PC-9 (cell line): ENCODE measurements at regions of chr9 and their contacts with region 1.

Region 1: DNA sequence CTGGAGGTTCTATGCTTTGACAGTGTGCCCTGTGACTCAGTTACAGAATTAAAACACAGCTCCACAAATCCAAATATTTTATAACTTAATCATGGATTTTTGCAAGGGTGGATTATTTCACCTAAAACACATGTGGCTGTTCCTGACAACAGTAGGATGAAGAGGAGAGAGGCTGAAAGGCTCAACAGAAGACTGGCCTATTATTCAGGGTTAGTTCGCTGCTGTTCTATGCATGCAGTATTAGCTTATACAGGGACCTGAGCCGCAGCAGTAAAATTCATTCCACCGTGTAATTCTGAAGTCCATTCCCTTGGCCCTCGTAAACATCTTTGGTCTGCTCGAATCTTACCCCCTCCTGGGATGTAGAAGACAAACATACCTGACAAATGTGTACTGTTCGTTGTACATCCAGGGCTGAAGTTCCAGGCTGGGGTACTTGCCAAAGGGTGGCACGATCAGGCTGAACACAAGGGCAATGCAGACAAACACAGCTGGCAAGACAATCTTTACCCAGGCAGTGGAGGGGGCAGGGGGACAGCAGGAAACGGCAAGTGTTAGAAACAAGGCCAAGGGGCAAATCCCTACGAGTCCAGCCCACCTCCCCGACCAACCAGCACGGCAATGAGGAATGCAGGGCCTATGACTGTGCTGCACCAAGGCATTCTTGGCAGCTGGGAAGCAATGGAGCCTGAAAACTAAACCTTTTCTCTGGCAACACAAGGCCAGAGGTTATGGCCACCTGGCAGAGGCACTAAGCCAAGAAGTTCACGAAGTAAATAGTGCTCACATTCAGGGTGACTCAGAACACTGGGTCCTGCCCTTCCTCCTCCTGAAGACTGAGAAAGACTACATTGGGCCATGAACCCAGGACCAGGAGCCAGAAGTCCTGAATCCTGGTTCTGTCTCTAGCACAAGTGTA is 46.8 kb downstream of the NIPSNAP3B start:
- DNase-seq: peak; percentile 89 to 96
- H3K4me3 ChIP-seq: no peak overlapping the region
- H3K27ac ChIP-seq: peak overlapping the region; percentile 72
- H3K4me1 ChIP-seq: peaks cover 24% of the 10 kb centered on the region
- H3K27me3 ChIP-seq: no peaks in the 10 kb centered on the region
- CTCF ChIP-seq: no peak

Region 2: GRCh38 chr9:104339692-104340091 is 471.0 kb before region 1 on chr9:
- CTCF ChIA-PET with region 1: no interaction called
- POLR2A ChIA-PET with region 1: no interaction called
- intact Hi-C with region 1: no loop called
- DNase-seq: no peak
- H3K4me3 ChIP-seq: no peak overlapping the region
- H3K27ac ChIP-seq: no peak overlapping the region
- H3K4me1 ChIP-seq: no peaks in the 10 kb centered on the region
- H3K27me3 ChIP-seq: no peaks in the 10 kb centered on the region
- CTCF ChIP-seq: no peak

Region 3: DNA sequence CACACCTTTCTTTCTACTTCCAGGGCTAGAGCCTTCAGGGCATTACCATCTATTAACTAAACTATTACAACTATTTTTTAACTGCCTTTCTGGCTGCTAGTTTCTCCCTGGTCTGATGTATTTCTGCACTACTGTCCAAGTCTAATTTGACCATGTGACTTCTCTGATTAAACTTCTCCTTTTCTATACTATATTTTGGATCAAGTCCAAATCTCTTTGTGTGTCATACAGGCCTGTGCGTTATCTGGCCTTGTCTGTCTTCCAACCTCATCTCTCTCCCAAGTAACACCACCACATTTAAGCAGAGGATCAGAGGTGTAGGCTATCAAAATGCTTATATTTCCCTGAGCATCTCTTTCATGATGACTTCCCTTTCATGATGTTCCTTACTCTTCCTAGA is 353.8 kb before region 1 on chr9:
- CTCF ChIA-PET with region 1: no interaction called
- POLR2A ChIA-PET with region 1: no interaction called
- intact Hi-C with region 1: no loop called
- DNase-seq: no peak
- H3K4me3 ChIP-seq: no peak overlapping the region
- H3K27ac ChIP-seq: no peak overlapping the region
- H3K4me1 ChIP-seq: no peaks in the 10 kb centered on the region
- H3K27me3 ChIP-seq: no peaks in the 10 kb centered on the region
- CTCF ChIP-seq: no peak

Region 4: GRCh38 chr9:104747558-104748358 is 62.9 kb before region 1 on chr9 and contains the start of gene NIPSNAP3A:
- CTCF ChIA-PET with region 1: no interaction called
- POLR2A ChIA-PET with region 1: no interaction called
- intact Hi-C with region 1: no loop called
- DNase-seq: peak; percentile 71 to 87
- H3K4me3 ChIP-seq: peak within 1 kb of the TSS; percentile 94
- H3K27ac ChIP-seq: peak within 1 kb of the TSS; percentile 47
- H3K4me1 ChIP-seq: peaks cover 19% of the 10 kb centered on the region
- H3K27me3 ChIP-seq: no peaks in the 10 kb centered on the region
- CTCF ChIP-seq: no peak
- total RNA-seq, gene NIPSNAP3A: 19.8 and 21.4 TPM in 2 replicates

Region 5: GRCh38 chr9:104831681-104832080 is 21.0 kb after region 1 on chr9:
- CTCF ChIA-PET with region 1: no interaction called
- POLR2A ChIA-PET with region 1: no interaction called
- intact Hi-C with region 1: loop called (anchors 2 kb)
- DNase-seq: no peak
- H3K4me3 ChIP-seq: no peak overlapping the region
- H3K27ac ChIP-seq: no peak overlapping the region
- H3K4me1 ChIP-seq: peaks cover 35% of the 10 kb centered on the region
- H3K27me3 ChIP-seq: no peaks in the 10 kb centered on the region
- CTCF ChIP-seq: no peak

Region 6: GRCh38 chr9:104850786-104851545 is 40.3 kb after region 1 on chr9:
- CTCF ChIA-PET with region 1: no interaction called
- POLR2A ChIA-PET with region 1: no interaction called
- intact Hi-C with region 1: loop called (anchors 5 kb)
- DNase-seq: no peak
- H3K4me3 ChIP-seq: no peak overlapping the region
- H3K27ac ChIP-seq: no peak overlapping the region
- H3K4me1 ChIP-seq: peaks cover 37% of the 10 kb centered on the region
- H3K27me3 ChIP-seq: no peaks in the 10 kb centered on the region
- CTCF ChIP-seq: no peak

Region 7: DNA sequence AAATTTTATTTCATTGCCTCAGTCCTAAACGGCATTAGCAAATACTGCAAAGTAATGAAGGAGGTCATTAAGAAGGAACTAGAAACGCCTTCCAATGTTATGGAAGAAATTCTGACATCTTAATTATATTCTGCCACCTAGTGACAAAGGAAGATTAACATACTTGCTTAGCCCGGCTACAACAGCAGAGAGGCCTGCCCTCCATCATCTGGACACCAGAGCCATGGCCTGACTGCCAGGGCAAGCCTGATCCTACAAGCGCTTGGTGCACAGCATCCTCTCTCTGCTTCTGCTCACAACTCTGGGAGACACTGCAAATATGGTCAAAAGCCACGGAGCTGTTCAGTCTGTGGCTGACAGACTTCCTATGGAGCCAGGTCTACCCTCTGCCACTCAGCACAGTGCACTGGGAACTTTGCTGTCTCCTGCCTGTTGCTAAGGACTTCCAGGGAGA is 346.5 kb after region 1 on chr9:
- CTCF ChIA-PET with region 1: no interaction called
- POLR2A ChIA-PET with region 1: no interaction called
- intact Hi-C with region 1: loop called (anchors 1 kb)
- DNase-seq: peak; percentile 52 to 71
- H3K4me3 ChIP-seq: no peak overlapping the region
- H3K27ac ChIP-seq: no peak overlapping the region
- H3K4me1 ChIP-seq: peaks cover 24% of the 10 kb centered on the region
- H3K27me3 ChIP-seq: no peaks in the 10 kb centered on the region
- CTCF ChIP-seq: peak; percentile 71